Activated naive CD4-positive, alpha-beta T cell treated with anti-CD3 and anti-CD28 coated beads, Interleukin-2, amount 10 ng/mL, durations not matched to agents 7 days and 5 days (primary cell): ENCODE measurements at regions of chr1 and their contacts with region 1.

Region 1: DNA sequence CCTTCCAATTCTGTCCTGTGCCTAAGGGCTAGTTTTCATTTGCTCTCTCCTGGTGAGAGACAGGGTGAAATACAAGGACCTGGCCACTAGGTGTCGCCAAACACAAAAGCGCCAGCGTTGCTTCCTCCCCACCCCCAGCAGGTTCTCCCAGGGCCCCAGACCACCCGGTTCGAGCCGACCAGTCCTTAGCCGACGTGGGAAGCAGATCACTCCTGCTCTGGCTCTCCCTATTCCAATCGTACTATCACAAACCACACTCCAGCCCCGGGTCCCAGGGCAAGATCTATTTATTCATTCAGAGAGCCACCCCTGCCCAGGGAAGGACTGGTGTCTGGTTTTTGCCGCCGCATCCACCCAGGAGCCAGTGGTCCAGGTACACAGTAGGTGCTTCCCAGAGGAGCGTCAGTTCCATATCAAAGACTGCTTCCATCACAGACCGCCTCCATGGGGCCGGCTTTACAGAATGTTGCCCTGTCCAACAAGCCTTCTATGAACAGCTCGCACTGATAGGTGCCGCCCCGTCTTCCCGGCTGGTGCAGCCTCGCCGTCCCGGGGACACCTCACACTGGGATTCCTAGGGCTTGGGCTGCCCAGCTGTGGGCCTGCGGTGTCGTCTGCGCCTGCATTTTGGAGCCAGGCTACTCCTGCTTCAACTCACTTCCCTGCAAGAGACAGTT is 35.0 kb downstream of the CTNNBIP1 start:
- DNase-seq: peak; percentile 84
- H3K4me3 Mint-ChIP-seq: no peak overlapping the region
- H3K27ac Mint-ChIP-seq: no peak overlapping the region
- H3K4me1 Mint-ChIP-seq: peaks cover 5% of the 10 kb centered on the region
- H3K27me3 Mint-ChIP-seq: peaks cover 3% of the 10 kb centered on the region

Region 2: DNA sequence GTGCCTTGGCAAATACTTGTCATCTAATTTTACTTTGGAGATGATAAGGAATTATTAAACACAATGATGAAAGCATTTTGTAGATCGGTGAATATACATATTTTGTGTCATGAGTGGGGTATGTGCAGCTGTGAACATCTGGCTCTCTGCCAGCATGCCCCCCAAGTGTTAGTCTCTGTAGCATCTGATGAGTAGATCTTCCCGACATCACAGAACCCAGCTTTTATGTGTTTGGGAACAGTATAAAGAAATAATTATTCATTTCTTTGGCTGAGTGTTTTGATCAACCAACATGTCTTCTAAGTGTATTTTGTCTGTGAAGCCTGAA is 39.5 kb after region 1 on chr1:
- CTCF ChIA-PET with region 1: interaction called, 21 read pairs
- DNase-seq: no peak
- H3K4me3 Mint-ChIP-seq: no peak overlapping the region
- H3K27ac Mint-ChIP-seq: no peak overlapping the region
- H3K4me1 Mint-ChIP-seq: peaks cover 13% of the 10 kb centered on the region
- H3K27me3 Mint-ChIP-seq: peaks cover 7% of the 10 kb centered on the region

Region 3: DNA sequence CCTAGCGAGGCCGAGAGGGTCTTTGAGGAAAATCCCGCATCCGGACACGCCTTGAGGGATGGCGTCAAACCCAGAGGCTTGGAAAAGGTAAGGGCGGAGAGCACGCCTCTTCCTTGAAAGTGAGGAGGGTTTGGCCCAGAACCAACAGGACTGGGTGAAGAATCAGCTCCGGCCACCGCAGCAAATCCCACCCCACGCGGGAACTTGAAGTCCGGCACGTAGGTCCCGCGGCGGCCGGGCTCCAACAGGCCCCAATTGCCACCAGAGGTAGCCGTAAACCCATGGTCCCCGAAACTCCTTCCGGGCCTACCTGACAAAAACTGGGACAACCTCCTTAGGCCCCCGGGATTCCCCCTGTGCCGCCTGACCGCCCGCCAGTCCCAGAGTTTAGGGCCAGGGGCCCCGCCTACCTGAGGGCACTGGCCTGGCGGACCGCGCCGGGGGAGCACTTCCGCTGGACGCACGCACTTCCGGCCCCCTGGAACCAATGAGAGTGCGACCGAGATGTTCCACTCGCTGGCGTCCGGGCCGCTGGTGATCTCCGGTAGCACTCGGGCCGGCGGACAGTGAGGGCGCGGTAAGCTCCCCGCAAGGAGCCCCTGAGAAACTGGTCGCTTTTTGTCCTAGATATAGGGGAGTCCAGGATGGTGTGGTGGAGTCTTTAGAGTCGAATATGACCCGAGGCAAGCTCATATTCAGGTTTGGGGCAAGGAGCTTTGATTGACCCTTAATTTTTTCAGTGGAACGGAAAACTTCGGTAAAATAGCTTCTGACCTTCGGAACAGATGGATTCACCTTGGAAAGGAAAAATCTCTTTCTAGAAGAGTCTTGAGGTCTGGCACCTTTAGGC is 68.1 kb after region 1 on chr1 and contains the starts of genes LZIC and NMNAT1:
- CTCF ChIA-PET with region 1: interaction called, 24 read pairs
- DNase-seq: peak; percentile 93
- H3K4me3 Mint-ChIP-seq: peak within 1 kb of the TSS; percentile 98
- H3K27ac Mint-ChIP-seq: peak within 1 kb of the TSS; percentile 87
- H3K4me1 Mint-ChIP-seq: peaks cover 19% of the 10 kb centered on the region
- H3K27me3 Mint-ChIP-seq: no peaks in the 10 kb centered on the region